CD14-positive monocyte (primary cell): ENCODE measurements at regions of chr5 and their contacts with region 1.

Region 1: GRCh38 chr5:181243512-181244343 is at the start of gene RACK1:
- DNase-seq: peak; percentile 82 to 87 (median 84)
- H3K4me3 ChIP-seq: peak within 1 kb of the TSS; percentile 93 to 96 (median 93)
- H3K4me3 Mint-ChIP-seq: peak within 1 kb of the TSS; percentile 95 to 97
- H3K27ac ChIP-seq: peak within 1 kb of the TSS; percentile 90 to 95
- H3K27ac Mint-ChIP-seq: peak within 1 kb of the TSS; percentile 97 to 99 (median 98)
- H3K4me1 ChIP-seq: peaks cover 53 to 63% of the 10 kb centered on the region in 2 donors
- H3K4me1 Mint-ChIP-seq: peaks cover 53% of the 10 kb centered on the region
- H3K27me3 ChIP-seq: no peaks in the 10 kb centered on the region
- H3K27me3 Mint-ChIP-seq: peaks cover 0 to 2% (median 0%) of the 10 kb centered on the region in 3 donors
- CTCF ChIP-seq: no peak
- polyA plus RNA-seq, gene RACK1: 1,150 to 2,356 (median 1,195) TPM

Region 2: GRCh38 chr5:181260387-181261319 is 16.9 kb after region 1 on chr5 and contains the start of gene TRIM52:
- intact Hi-C with region 1: loop called in 1 of 2 experiments (anchors 2 kb)
- DNase-seq: peak; percentile 85 to 89 (median 87)
- H3K4me3 ChIP-seq: peak within 1 kb of the TSS; percentile 80 to 97 (median 89)
- H3K4me3 Mint-ChIP-seq: peak within 1 kb of the TSS; percentile 95 to 96
- H3K27ac ChIP-seq: peak within 1 kb of the TSS; percentile 93 to 96
- H3K27ac Mint-ChIP-seq: peak within 1 kb of the TSS; percentile 93 to 99 (median 97)
- H3K4me1 ChIP-seq: peaks cover 25 to 46% of the 10 kb centered on the region in 2 donors
- H3K4me1 Mint-ChIP-seq: peaks cover 46% of the 10 kb centered on the region
- H3K27me3 ChIP-seq: no peaks in the 10 kb centered on the region
- H3K27me3 Mint-ChIP-seq: no peaks in the 10 kb centered on the region
- CTCF ChIP-seq: no peak
- polyA plus RNA-seq, gene TRIM52: 5.7 to 26.0 (median 8.5) TPM